CD8-positive, alpha-beta T cell (primary cell): ENCODE measurements at regions of chr5 and their contacts with region 1.

Region 1: GRCh38 chr5:150449517-150450339 is at the start of gene RPS14:
- DNase-seq: peak; percentile 90 to 97 (median 95)
- ATAC-seq: peak; percentile 92
- H3K4me3 ChIP-seq: peak within 1 kb of the TSS; percentile 77 to 89
- H3K4me3 Mint-ChIP-seq: peak within 1 kb of the TSS; percentile 100
- H3K27ac ChIP-seq: peak within 1 kb of the TSS; percentile 93 to 98
- H3K27ac Mint-ChIP-seq: peak within 1 kb of the TSS; percentile 100
- H3K4me1 ChIP-seq: peaks cover 22% of the 10 kb centered on the region
- H3K4me1 Mint-ChIP-seq: peaks cover 36% of the 10 kb centered on the region
- H3K27me3 ChIP-seq: no peaks in the 10 kb centered on the region
- H3K27me3 Mint-ChIP-seq: no peaks in the 10 kb centered on the region
- CTCF ChIP-seq: peak; percentile 84
- total RNA-seq, gene RPS14: 5,604 to 5,613 TPM

Region 2: GRCh38 chr5:150700594-150701293 is 251.0 kb after region 1 on chr5 and contains the start of gene RBM22:
- CTCF ChIA-PET with region 1: interaction called, 4 read pairs
- POLR2A ChIA-PET with region 1: interaction called, 13 read pairs
- intact Hi-C with region 1: loop called (anchors 1 kb)
- DNase-seq: peak; percentile 82 to 96 (median 94)
- ATAC-seq: peak; percentile 90
- H3K4me3 ChIP-seq: peak within 1 kb of the TSS; percentile 80 to 81
- H3K4me3 Mint-ChIP-seq: no peak within 1 kb of the TSS
- H3K27ac ChIP-seq: peak within 1 kb of the TSS; percentile 94 to 97
- H3K27ac Mint-ChIP-seq: no peak within 1 kb of the TSS
- H3K4me1 ChIP-seq: peaks cover 19% of the 10 kb centered on the region
- H3K4me1 Mint-ChIP-seq: peaks cover 2% of the 10 kb centered on the region
- H3K27me3 ChIP-seq: no peaks in the 10 kb centered on the region
- H3K27me3 Mint-ChIP-seq: no peaks in the 10 kb centered on the region
- CTCF ChIP-seq: peak; percentile 85
- total RNA-seq, gene RBM22: 119 to 125 TPM